ENCODE measurements at regions of chr18 and their contacts with region 1.

Region 1: DNA sequence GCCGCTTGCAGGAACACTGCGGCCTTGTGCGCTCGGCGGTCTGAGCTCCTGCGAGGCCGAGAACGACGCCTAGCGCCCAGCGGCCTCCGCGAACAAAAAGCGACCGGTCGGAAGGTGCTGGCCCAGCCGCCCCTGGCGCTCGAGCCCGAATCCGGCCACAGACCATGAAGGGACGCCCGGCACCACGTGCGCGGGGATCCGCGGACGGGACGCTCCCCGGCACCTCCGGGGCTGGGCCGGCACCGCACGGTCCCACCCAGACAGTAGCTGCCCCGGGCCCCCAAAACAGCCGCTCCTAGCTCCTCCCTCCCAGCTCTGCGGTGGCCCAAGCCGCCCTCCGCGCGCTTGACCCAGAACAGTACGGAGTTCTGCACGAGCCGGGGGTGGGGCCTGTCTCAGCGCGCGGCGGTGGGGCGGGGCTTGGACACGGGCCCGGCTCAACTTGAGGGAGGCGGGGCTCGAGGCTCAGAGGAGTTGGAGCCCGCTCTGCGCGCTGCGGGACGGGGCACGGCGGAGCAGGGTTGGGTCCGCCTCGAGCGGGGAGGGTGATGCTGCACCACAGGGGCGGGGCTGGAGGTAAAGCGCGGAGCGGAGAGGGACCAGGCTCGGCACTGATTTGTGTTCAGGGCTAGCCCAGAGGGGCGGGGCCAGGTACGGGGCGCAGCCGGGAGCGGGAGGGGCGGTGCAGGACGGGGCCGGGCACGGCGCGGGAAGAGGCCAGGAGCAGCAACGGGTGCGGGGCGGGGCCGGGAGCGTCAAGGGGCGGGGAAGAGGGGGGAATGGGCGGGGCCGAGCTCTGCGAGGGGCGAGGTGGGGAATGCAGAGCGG is 538 bp upstream of the IMPA2 start:
- DNase-seq: peak; percentile 99
- H3K4me3 Mint-ChIP-seq: peak overlapping the region; percentile 86
- H3K27ac Mint-ChIP-seq: peak overlapping the region; percentile 83
- H3K4me1 Mint-ChIP-seq: peaks cover 14% of the 10 kb centered on the region
- H3K27me3 Mint-ChIP-seq: peaks cover 2% of the 10 kb centered on the region

Region 2: DNA sequence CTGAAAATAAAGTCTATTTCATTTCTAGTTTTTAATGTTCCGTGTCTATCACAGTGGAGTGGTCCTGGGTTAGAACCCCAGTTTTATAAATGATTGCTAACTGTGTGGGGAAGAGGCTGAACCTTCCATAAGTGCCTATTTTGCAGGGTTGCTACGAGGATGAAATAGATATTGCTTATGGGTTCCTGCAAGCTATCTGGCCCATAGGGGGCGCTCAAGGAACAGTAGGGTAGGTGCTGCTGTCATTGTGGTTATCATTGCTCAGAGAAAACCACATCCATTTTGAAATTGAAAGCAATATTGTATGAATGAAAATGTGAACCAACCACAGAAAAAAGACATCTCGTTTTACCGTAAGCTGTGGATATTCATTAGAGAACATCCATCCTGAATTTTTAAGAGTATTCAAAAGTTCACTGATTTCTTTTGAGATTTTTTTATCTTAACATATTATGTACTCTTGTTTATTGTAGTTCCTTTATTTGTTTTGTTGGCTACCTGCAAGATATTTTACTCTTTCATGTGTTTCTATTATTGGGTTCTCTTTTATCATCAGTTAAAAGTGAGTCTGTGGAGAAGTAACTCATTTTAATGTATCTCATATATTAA is 1193.4 kb before region 1 on chr18:
- CTCF ChIA-PET with region 1: no interaction called
- intact Hi-C with region 1: loop called (anchors 5 kb)
- DNase-seq: peak; percentile 94
- H3K4me3 Mint-ChIP-seq: no peak overlapping the region
- H3K27ac Mint-ChIP-seq: no peak overlapping the region
- H3K4me1 Mint-ChIP-seq: peaks cover 2% of the 10 kb centered on the region
- H3K27me3 Mint-ChIP-seq: peaks cover 14% of the 10 kb centered on the region

Region 3: GRCh38 chr18:11908182-11909060 is 72.3 kb before region 1 on chr18 and contains the start of gene MPPE1:
- CTCF ChIA-PET with region 1: no interaction called
- intact Hi-C with region 1: loop called (anchors 1 kb)
- DNase-seq: peak; percentile 89
- H3K4me3 Mint-ChIP-seq: peak within 1 kb of the TSS; percentile 89
- H3K27ac Mint-ChIP-seq: peak within 1 kb of the TSS; percentile 93
- H3K4me1 Mint-ChIP-seq: peaks cover 24% of the 10 kb centered on the region
- H3K27me3 Mint-ChIP-seq: no peaks in the 10 kb centered on the region
- total RNA-seq, gene MPPE1: 30.4 to 34.3 TPM

Region 4: DNA sequence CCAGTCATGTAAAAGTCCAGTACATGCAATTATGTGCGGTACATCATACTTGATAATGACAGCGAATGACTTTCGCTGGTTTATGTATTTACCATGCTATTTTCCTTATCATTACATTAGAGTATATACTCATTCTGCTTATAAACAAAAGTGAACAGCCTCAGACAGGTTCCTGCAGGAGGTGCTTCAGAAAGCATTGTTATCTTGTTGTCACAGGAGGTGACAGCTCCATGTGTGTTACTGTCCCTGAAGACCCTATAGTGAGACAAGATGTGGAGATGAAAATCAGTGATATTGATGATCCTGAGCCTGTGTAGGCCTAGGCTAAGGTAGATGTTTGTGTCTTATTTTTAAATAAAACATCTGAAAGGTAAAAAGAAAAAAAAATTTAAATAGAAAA is 57.3 kb before region 1 on chr18:
- CTCF ChIA-PET with region 1: no interaction called
- intact Hi-C with region 1: no loop called
- DNase-seq: no peak
- H3K4me3 Mint-ChIP-seq: no peak overlapping the region
- H3K27ac Mint-ChIP-seq: no peak overlapping the region
- H3K4me1 Mint-ChIP-seq: no peaks in the 10 kb centered on the region
- H3K27me3 Mint-ChIP-seq: no peaks in the 10 kb centered on the region

Region 5: GRCh38 chr18:11947214-11948191 is 33.3 kb before region 1 on chr18:
- CTCF ChIA-PET with region 1: interaction called, 4 read pairs
- intact Hi-C with region 1: loop called (anchors 1 kb)
- DNase-seq: peak; percentile 80
- H3K4me3 Mint-ChIP-seq: peak overlapping the region; percentile 83
- H3K27ac Mint-ChIP-seq: peak overlapping the region; percentile 81
- H3K4me1 Mint-ChIP-seq: peaks cover 4% of the 10 kb centered on the region
- H3K27me3 Mint-ChIP-seq: no peaks in the 10 kb centered on the region

Region 6: DNA sequence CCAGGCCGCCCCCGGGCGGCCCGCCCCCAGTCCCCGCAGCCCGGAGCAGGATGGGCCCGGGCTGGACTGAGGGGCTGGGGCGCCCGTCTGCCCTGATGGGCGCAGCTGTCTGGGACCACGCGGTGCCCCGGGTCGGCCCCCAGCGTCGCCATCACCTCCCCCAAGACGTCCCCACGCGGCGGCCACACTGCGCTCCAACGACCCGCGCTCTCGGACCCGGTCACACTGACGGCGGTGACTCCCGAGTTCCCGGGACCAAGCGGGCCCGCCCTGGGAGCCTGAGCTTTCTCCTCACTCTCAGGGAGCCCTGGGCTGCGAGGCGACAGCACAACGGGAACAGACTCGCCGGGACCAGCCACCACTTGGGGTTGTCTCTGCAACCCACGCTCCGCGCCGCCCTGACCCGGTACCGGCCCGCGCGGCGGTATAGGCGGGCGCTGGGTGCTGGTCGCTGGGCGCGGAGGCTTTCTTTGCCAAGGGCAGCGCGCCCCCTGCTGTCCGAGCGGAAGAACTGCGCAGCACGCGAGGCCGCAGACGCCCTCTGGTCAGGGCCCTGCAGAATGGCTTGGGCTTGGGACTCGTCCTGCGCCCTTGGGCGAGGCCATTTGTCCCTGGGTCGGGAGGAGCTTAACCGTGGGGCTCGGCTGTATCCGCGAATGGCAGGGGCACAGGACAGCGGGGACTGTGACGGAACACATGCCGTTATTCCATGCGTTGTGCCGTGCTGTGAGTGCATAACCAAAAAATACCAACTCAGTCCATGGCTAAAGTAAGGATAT is 58.1 kb after region 1 on chr18:
- CTCF ChIA-PET with region 1: interaction called, 3 read pairs
- intact Hi-C with region 1: loop called (anchors 1 kb)
- DNase-seq: peak; percentile 76
- H3K4me3 Mint-ChIP-seq: peak overlapping the region; percentile 48
- H3K27ac Mint-ChIP-seq: no peak overlapping the region
- H3K4me1 Mint-ChIP-seq: peaks cover 10% of the 10 kb centered on the region
- H3K27me3 Mint-ChIP-seq: peaks cover 5% of the 10 kb centered on the region

Region 7: DNA sequence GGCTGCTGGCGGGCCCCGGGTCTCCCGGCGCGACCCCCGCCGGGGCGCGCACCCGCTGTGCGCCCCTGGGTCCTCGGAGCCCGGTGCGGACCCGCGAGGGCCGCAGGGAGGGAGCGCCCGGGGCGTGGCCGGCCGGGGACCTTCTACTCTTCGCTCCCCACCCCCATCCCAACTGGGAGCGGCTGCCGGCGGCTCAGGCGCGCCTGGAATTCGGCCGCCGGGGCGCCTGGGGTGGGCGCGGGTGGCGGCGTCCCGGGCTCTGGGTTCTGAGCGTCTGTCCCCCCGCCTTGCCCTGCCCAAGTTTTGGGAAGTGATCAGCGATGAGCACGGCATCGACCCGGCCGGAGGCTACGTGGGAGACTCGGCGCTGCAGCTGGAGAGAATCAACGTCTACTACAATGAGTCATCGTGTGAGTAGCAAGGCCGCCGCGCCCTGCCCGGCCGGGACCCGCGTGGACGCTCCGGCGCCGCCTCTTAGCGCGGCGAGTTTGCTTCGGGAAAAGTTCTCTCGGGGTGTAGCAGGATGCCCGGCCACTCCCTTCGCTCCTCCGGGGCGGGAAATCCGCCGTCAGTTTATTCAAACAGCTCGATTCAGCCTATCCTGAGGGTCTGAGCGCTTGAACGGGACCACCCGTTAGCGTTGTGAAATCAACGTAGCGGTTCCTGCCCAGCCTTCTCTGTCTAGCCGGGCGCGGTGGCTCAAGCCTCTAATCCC is 327.8 kb after region 1 on chr18:
- CTCF ChIA-PET with region 1: no interaction called
- intact Hi-C with region 1: no loop called
- DNase-seq: peak; percentile 36
- H3K4me3 Mint-ChIP-seq: peak overlapping the region; percentile 62
- H3K27ac Mint-ChIP-seq: no peak overlapping the region
- H3K4me1 Mint-ChIP-seq: peaks cover 10% of the 10 kb centered on the region
- H3K27me3 Mint-ChIP-seq: peaks cover 43% of the 10 kb centered on the region

Region 8: DNA sequence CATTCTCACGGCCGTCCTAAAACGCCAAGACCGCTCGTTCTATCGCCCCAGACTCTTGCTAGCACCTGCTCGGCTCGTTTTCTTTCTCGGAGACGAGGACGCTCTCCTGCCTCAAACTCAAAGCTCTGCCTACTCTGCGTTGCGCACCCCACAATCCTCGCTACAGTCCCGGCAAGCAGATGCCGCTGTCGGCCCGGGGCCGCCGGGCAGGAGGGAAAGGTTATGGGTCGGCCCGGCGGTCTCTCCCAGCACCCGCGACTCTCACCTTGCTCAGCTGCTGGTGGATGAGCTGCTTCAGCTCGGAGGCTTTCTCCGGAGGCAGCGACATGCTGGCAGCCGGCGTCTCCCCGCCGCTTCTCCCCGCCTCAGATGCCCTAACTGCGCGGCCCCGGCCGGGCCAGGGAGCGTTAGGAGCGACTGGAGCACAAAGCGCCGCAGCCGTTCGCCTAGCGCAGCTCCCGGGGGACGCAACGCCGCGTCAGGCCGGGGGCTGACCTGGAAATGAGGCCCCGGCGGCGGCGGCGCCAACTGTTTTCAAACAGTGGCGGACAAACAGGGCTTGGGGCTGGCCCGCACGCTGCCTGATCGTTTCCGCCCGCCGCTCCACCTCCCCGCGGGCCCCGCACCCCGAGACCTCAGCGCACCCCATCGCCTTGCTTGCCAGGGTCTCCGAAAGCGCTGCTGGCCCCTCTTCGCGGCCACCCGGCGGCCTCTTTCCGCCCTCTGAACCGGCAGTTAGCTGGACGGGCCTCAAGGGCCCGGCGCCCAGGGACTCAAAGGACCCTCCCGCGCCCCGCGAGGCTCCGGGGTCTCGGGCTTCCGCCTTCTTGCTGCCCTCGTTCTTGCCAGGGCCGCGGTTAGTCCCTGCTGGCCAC is 721.7 kb after region 1 on chr18 and contains the starts of genes CEP76 and PSMG2:
- CTCF ChIA-PET with region 1: no interaction called
- intact Hi-C with region 1: loop called (anchors 5 kb)
- DNase-seq: peak; percentile 80
- H3K4me3 Mint-ChIP-seq: peak within 1 kb of the TSS; percentile 97
- H3K27ac Mint-ChIP-seq: peak within 1 kb of the TSS; percentile 97
- H3K4me1 Mint-ChIP-seq: peaks cover 41% of the 10 kb centered on the region
- H3K27me3 Mint-ChIP-seq: no peaks in the 10 kb centered on the region
- total RNA-seq, gene CEP76: 14.8 to 18.0 TPM
- total RNA-seq, gene PSMG2: 99.2 to 107 TPM

Measured in activated naive CD4-positive, alpha-beta T cell treated with anti-CD3 and anti-CD28 coated beads for 36 hours (primary cell).